ENCODE measurements at regions of chr3 and their contacts with region 1.

Region 1: GRCh38 chr3:81666493-81667121 is 94.8 kb downstream of the GBE1 start:
- DNase-seq: peak; percentile 24
- CTCF ChIP-seq: peak; percentile 63

Region 2: GRCh38 chr3:81249540-81250029 is 417.0 kb before region 1 on chr3:
- CTCF ChIA-PET with region 1: no interaction called
- POLR2A ChIA-PET with region 1: no interaction called
- DNase-seq: peak; percentile 2
- CTCF ChIP-seq: no peak

Region 3: DNA sequence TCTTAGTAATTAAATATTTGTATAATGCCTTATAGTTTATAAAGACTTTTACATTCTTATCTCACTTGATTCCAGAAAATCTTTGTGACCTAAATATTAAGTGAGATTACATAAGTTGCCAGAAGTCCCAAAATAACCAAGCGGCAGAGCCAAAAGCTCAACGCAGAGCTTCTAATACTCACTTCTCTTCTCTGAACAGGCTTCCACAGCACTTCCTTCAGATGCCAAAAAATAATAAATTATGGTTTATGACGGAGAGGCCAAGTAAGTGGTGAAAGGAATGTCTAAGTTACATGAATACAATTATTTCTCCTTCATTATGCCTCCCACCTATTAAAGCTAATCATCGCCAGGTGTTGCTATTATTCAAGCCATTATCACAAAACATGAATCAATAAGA is 15.5 kb before region 1 on chr3:
- CTCF ChIA-PET with region 1: interaction called, 15 read pairs
- POLR2A ChIA-PET with region 1: no interaction called
- DNase-seq: no peak
- CTCF ChIP-seq: no peak

Region 4: DNA sequence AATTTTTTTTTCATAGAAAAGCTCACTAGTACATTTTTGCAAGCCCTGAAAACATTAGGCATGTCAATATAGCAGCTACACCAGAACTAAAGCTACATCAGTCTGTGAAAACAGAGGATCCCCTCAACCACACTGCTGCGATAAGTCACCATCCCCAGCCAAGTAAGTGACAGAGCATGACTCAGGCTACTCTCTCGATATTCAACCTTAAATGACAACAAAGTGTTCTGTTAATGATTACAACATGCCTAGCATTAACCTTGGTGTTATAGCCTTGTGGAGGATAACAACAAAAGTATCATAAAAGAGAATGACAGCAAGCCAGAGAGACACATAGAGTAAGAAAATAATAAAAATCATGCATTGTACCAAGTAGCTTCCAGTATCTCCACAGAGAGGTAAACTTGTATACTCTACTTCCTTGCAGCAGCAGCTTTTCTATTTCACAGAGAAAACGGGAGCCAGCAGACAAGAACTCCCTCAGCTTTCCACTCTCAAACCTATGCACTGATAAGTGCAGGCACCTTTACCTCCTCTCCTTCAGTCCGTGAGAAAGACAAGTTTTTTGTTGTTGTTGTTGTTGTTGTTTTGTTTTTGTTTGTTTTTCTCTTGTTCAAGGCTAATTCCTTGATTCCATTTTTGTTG is 18.3 kb after region 1 on chr3:
- CTCF ChIA-PET with region 1: interaction called, 12 read pairs
- POLR2A ChIA-PET with region 1: no interaction called
- DNase-seq: no peak
- CTCF ChIP-seq: no peak

Region 5: DNA sequence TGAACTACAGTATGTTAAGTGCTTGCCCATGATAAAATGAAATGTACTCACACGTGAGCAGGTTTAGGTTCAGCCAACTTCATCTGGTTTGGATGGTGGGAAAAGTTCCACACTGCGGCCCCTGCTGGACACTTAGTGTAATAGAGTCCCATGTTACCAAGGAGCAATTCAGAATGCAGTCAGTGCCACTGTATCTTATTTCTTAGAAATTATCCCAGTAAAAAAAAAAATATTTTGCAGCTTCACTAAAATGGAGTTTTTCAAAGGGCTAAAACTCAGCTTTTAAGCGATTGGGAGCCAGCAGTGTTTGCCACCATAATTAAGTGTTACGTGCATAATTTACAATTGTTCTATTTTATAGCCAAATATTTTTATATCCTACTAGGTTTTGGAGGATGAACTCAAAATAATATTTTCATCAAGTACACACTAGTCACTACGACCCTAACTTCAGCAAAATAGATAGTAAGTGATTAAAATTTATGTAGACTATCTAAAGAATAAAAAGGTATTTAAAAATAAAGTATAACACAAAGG is 466.5 kb after region 1 on chr3:
- CTCF ChIA-PET with region 1: interaction called, 24 read pairs
- POLR2A ChIA-PET with region 1: no interaction called
- DNase-seq: peak; percentile 36
- CTCF ChIP-seq: peak; percentile 66

Region 6: DNA sequence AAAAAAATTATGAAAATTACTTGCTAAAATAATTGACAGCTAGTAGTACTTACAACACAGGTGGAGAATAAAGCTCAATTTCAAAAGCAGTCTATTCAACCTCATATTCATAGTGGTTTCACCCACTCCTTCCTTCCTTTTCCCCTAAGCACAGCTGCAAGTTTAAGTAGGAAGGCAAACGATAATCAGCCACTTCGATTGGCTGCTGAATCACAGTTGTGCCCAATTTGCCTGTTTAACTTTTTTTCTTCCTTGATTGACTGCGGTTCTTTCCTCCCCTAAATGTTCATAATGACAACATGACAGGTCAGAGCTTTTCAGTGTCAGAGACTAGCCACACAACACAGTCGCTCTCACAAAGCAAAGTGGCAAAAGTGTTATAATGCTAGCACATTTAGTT is 562.8 kb after region 1 on chr3:
- CTCF ChIA-PET with region 1: no interaction called
- POLR2A ChIA-PET with region 1: no interaction called
- DNase-seq: peak; percentile 19
- CTCF ChIP-seq: no peak